ENCODE measurements at regions of chr2 and their contacts with region 1.

Region 1: DNA sequence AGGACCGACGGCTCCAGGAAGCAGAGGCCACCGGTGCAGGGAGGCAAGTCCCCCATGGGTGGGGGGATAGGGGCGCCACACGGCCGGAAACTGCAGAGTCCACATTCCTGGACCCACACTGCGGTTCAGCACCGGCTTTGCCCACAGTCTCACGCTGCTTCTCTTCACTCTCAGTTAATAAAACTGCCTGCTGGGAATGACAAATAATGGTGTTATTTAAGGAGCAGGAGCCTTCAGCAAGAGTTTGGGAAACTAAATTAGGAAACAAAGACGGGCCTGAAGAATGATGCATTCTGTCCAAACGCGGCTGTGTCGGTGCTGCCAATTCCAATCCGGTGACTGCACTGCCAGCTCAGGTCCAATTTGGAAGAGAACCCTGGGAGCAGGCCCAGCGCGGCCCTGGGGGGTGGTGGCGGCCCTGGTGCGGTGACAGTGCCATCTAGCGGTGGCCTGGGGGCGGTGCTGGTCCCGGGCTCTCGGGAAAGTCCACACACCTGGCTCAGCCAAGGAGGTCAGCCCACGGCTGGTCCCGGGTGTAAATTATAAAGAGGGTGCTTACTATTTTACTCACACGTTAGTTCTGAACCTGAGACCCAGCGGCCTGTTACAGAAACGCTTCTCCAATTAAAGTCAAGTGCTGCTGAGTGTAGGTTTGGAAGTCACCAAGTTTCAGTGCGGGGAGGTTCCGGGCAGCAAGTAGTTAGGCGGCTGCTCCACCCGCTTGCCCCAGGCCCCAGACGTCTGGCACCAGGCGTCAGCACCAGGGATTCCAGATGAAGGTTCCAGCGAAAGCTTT is 73.1 kb upstream of the PXDN start:
- DNase-seq: peak; percentile 86 to 89
- ATAC-seq: peak; percentile 92 to 97 (median 94)
- H3K4me3 ChIP-seq: peak overlapping the region in 2 of 10 donors; percentile 7 to 10
- H3K27ac ChIP-seq: peak overlapping the region; percentile 3 to 89 (median 83)
- H3K4me1 ChIP-seq: peaks cover 8 to 26% (median 13%) of the 10 kb centered on the region in 9 donors
- H3K27me3 ChIP-seq: peaks cover 0 to 8% (median 0%) of the 10 kb centered on the region in 7 donors
- CTCF ChIP-seq: peak; percentile 95 to 99 (median 98)

Region 2: DNA sequence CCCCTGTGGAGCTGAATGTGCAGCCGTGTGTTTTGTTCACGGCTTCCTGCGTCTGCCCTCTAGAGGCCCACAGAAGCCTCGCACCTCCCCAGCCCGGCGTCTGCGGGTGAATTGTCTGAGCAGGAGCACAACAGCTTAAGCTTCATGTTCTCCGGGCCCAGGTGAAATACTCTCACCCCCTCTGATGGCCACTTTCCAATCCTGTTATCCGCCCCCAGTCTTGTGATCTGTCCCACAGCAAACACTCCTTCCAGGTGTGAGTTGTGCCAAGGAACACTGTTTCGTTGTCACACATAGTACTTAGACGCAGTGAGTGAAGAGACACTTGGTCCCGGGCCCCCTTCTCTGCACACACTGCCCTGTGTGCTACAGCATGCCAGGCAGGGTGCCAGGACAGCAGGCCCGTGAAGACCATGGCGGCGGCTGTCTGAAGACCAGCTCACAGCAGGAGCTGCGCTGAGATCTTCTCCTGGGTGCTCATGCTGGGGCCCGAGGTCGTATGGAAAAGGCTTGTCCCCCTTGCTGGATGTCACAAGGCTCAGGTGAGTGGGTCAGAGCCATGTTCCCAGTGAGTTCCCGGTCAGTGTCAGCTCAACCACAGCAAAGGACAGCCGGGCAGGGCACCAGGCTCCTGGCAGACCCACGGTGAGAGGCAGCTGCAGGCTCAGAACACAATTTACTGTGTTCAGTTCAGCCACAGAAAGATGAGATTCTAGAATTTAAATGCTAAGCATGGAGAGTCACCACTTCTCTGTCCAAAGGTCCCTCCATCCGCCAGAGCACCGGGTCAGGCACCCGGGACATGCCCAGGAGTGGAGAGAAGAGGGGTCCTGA is 66.3 kb before region 1 on chr2:
- intact Hi-C with region 1: loop called in 1 of 10 experiments (anchors 10 kb)
- DNase-seq: peak; percentile 66 to 67
- ATAC-seq: peak; percentile 71 to 86 (median 78)
- H3K4me3 ChIP-seq: no peak overlapping the region
- H3K27ac ChIP-seq: no peak overlapping the region
- H3K4me1 ChIP-seq: peaks cover 0 to 20% (median 6%) of the 10 kb centered on the region in 9 donors
- H3K27me3 ChIP-seq: peaks cover 0 to 26% (median 16%) of the 10 kb centered on the region in 7 donors
- CTCF ChIP-seq: peak; percentile 76 to 89 (median 84)

Region 3: GRCh38 chr2:1854729-1855547 is 37.5 kb after region 1 on chr2:
- intact Hi-C with region 1: no loop called
- DNase-seq: peak in 1 of 2 donors; percentile 22
- ATAC-seq: peak; percentile 78 to 87 (median 80)
- H3K4me3 ChIP-seq: peak overlapping the region in 2 of 10 donors; percentile 2 to 5
- H3K27ac ChIP-seq: no peak overlapping the region
- H3K4me1 ChIP-seq: peaks cover 0 to 11% (median 0%) of the 10 kb centered on the region in 9 donors
- H3K27me3 ChIP-seq: peaks cover 0 to 80% (median 56%) of the 10 kb centered on the region in 7 donors
- CTCF ChIP-seq: peak in 8 of 9 donors; percentile 30 to 71 (median 57)

Measured in heart right ventricle (tissue), 16 donors.